CD8-positive, alpha-beta T cell (primary cell): ENCODE measurements at regions of chr16 and their contacts with region 1.

Region 1: GRCh38 chr16:72764015-72764654 is 283.8 kb downstream of the ZFHX3 start:
- DNase-seq: no peak
- ATAC-seq: no peak
- H3K4me3 ChIP-seq: no peak overlapping the region
- H3K4me3 Mint-ChIP-seq: no peak overlapping the region
- H3K27ac ChIP-seq: no peak overlapping the region
- H3K27ac Mint-ChIP-seq: no peak overlapping the region
- H3K4me1 ChIP-seq: no peaks in the 10 kb centered on the region
- H3K4me1 Mint-ChIP-seq: peaks cover 4% of the 10 kb centered on the region
- H3K27me3 ChIP-seq: no peaks in the 10 kb centered on the region
- H3K27me3 Mint-ChIP-seq: no peaks in the 10 kb centered on the region
- CTCF ChIP-seq: no peak

Region 2: GRCh38 chr16:72705801-72706200 is 58.3 kb before region 1 on chr16:
- CTCF ChIA-PET with region 1: no interaction called
- POLR2A ChIA-PET with region 1: no interaction called
- intact Hi-C with region 1: loop called in 1 of 2 experiments (anchors 10 kb)
- DNase-seq: no peak
- ATAC-seq: no peak
- H3K4me3 ChIP-seq: no peak overlapping the region
- H3K4me3 Mint-ChIP-seq: no peak overlapping the region
- H3K27ac ChIP-seq: no peak overlapping the region
- H3K27ac Mint-ChIP-seq: no peak overlapping the region
- H3K4me1 ChIP-seq: no peaks in the 10 kb centered on the region
- H3K4me1 Mint-ChIP-seq: no peaks in the 10 kb centered on the region
- H3K27me3 ChIP-seq: no peaks in the 10 kb centered on the region
- H3K27me3 Mint-ChIP-seq: no peaks in the 10 kb centered on the region
- CTCF ChIP-seq: no peak

Region 3: GRCh38 chr16:72783716-72784318 is 19.7 kb after region 1 on chr16:
- CTCF ChIA-PET with region 1: no interaction called
- POLR2A ChIA-PET with region 1: no interaction called
- intact Hi-C with region 1: no loop called
- DNase-seq: no peak
- ATAC-seq: no peak
- H3K4me3 ChIP-seq: no peak overlapping the region
- H3K4me3 Mint-ChIP-seq: no peak overlapping the region
- H3K27ac ChIP-seq: no peak overlapping the region
- H3K27ac Mint-ChIP-seq: no peak overlapping the region
- H3K4me1 ChIP-seq: peaks cover 9% of the 10 kb centered on the region
- H3K4me1 Mint-ChIP-seq: peaks cover 17% of the 10 kb centered on the region
- H3K27me3 ChIP-seq: no peaks in the 10 kb centered on the region
- H3K27me3 Mint-ChIP-seq: peaks cover 8% of the 10 kb centered on the region
- CTCF ChIP-seq: no peak